PC-3 (cell line): ENCODE measurements at regions of chr1 and their contacts with region 1.

Region 1: GRCh38 chr1:151993654-151994496 is at the start of gene S100A10:
- DNase-seq: peak; percentile 89
- ATAC-seq: peak; percentile 25
- H3K4me3 ChIP-seq: peak within 1 kb of the TSS; percentile 91
- H3K27ac ChIP-seq: peak within 1 kb of the TSS; percentile 97
- H3K4me1 ChIP-seq: peaks cover 76% of the 10 kb centered on the region
- H3K27me3 ChIP-seq: no peaks in the 10 kb centered on the region
- CTCF ChIP-seq: no peak
- total RNA-seq, gene S100A10: 349 and 400 TPM in 2 replicates

Region 2: DNA sequence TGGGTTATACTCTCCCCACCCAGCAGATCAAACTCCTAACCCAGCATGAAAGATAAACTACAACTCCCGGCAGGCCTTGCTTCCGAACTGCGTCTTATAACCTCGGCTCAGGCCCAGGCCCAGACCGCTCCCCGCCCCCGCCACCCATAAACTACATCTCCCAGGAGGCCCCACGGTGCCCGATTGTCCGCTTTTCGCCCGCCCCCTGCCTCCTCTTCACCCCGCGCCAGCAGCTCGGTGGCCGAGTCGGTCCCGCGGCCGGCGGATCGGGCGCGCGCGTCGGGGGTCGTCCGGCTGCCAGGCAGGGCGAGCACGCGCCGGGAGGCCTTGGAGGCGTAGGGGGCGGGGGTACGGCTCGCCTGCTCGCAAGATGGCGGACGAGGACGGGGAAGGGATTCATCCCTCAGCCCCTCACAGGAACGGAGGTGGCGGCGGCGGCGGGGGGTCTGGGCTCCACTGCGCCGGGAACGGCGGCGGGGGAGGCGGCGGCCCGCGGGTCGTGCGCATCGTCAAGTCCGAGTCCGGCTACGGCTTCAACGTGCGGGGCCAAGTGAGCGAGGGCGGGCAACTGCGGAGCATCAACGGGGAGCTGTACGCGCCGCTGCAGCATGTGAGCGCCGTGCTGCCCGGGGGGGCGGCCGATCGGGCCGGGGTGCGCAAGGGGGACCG is 381.9 kb before region 1 on chr1 and contains the start of gene SNX27:
- CTCF ChIA-PET with region 1: no interaction called
- POLR2A ChIA-PET with region 1: no interaction called
- intact Hi-C with region 1: loop called (anchors 10 kb)
- DNase-seq: peak; percentile 93
- ATAC-seq: peak; percentile 82
- H3K4me3 ChIP-seq: peak within 1 kb of the TSS; percentile 87
- H3K27ac ChIP-seq: peak within 1 kb of the TSS; percentile 25; the same call in 1 of the 2 replicates
- H3K4me1 ChIP-seq: peaks cover 55% of the 10 kb centered on the region
- H3K27me3 ChIP-seq: no peaks in the 10 kb centered on the region
- CTCF ChIP-seq: no peak
- total RNA-seq, gene SNX27: 25.1 and 34.8 TPM in 2 replicates

Region 3: DNA sequence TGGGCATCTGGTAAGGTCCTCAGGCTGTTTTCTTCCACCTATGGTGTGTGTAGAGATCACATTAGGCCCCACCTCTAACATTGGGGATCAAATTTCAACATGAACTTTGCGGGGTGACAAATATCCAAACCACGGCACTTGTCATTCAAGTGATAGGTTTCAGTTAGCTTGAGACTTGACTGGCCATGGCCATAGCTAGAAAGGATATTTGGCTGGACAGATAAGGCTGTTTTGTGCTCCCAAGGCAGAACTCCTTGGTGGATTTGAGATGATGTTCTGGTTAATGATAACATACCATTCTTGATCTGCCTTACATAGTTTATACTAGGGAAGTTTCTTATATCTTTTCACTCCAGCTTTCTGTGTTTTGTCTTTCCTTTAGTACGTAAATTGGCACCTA is 325.8 kb before region 1 on chr1:
- CTCF ChIA-PET with region 1: no interaction called
- POLR2A ChIA-PET with region 1: no interaction called
- intact Hi-C with region 1: no loop called
- DNase-seq: no peak
- ATAC-seq: no peak
- H3K4me3 ChIP-seq: no peak overlapping the region
- H3K27ac ChIP-seq: no peak overlapping the region
- H3K4me1 ChIP-seq: no peaks in the 10 kb centered on the region
- H3K27me3 ChIP-seq: no peaks in the 10 kb centered on the region
- CTCF ChIP-seq: no peak

Region 4: GRCh38 chr1:151945725-151946364 is 48.0 kb before region 1 on chr1:
- CTCF ChIA-PET with region 1: interaction called, 8 read pairs
- POLR2A ChIA-PET with region 1: interaction called, 16 read pairs
- intact Hi-C with region 1: loop called (anchors 1 kb)
- DNase-seq: peak; percentile 100
- ATAC-seq: peak; percentile 76
- H3K4me3 ChIP-seq: peak overlapping the region; percentile 56
- H3K27ac ChIP-seq: peak overlapping the region; percentile 96
- H3K4me1 ChIP-seq: peaks cover 51% of the 10 kb centered on the region
- H3K27me3 ChIP-seq: no peaks in the 10 kb centered on the region
- CTCF ChIP-seq: no peak

Region 5: GRCh38 chr1:152034646-152035405 is 41.0 kb after region 1 on chr1:
- CTCF ChIA-PET with region 1: no interaction called
- POLR2A ChIA-PET with region 1: interaction called, 15 read pairs
- intact Hi-C with region 1: no loop called
- DNase-seq: peak; percentile 90
- ATAC-seq: peak; percentile 69
- H3K4me3 ChIP-seq: peak overlapping the region; percentile 77
- H3K27ac ChIP-seq: peak overlapping the region; percentile 90
- H3K4me1 ChIP-seq: peaks cover 33% of the 10 kb centered on the region
- H3K27me3 ChIP-seq: no peaks in the 10 kb centered on the region
- CTCF ChIP-seq: peak; percentile 89